Activated naive CD4-positive, alpha-beta T cell treated with anti-CD3 and anti-CD28 coated beads for 36 hours (primary cell): ENCODE measurements at regions of chr7 and their contacts with region 1.

Region 1: DNA sequence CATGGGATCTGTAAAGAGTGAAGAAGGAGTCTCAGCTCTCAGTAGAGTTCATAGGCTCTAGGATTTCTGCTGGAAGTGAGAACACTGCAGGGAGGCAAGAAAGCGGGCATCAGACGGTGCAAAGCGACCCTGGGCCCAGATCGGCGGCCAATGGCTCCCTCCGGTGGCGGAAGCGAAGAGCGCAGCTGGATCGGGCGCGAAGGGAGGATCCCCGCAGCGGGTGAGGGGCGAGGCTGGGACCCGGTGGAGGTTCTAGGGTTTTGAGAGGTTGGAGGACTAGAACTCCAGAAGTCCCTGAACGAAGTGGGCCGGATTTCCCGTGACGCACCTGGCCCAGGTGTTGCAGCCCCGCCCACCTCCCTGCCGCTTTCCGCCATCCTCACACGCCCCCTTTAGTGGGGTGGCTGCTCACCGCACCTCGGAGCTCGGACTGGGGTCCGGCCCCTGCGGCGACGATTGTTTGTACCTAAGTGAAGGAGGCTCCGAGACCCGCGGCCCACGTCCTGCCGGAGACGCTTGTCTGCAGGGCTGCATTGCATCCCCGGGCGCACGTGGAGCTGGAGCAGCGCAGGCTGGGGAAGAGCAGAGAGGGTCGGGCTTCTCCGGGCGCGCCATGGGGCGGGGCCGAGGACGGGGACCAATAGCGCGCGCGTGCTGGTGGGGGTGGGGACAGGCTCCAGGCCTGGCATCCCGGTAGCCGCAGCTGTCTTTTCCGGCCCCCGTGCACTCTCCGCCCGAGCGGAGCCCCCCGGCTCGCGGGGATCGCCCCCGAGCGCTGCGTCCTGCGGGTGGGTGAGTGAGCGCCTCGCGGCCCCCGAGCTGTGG is at the start of gene SLC12A9:
- DNase-seq: peak; percentile 89
- H3K4me3 Mint-ChIP-seq: peak within 1 kb of the TSS; percentile 89
- H3K27ac Mint-ChIP-seq: peak within 1 kb of the TSS; percentile 50
- H3K4me1 Mint-ChIP-seq: peaks cover 18% of the 10 kb centered on the region
- H3K27me3 Mint-ChIP-seq: no peaks in the 10 kb centered on the region
- total RNA-seq, gene SLC12A9: 10.1 to 10.5 TPM

Region 2: DNA sequence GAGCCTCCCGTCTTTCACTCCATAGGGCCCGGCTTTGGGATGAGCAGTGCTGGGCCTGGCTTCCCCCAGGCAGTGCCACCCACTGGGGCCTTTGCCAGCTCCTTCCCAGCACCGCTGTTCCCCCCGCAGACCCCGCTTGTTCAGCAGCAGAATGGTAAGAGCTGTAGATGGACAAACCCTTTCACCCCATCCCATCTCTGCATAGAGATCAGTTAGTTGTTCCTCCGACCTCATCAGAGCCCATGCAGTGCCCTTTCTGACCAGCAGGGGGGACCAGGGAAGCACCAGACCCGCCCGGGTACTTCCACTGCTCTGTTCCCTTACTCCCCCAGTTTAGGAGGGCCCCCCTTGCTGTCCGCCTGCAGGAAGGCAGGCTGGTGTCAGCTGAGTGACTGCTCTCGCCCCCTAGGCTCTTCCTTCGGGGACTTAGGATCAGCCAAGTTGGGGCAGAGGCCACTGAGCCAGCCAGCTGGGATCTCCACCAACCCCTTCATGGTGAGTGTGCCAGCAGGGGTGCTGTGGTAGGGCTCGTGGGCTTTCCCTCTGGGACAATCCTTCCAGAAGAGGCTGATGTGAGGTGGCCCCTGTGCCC is 288.4 kb before region 1 on chr7:
- CTCF ChIA-PET with region 1: no interaction called
- intact Hi-C with region 1: loop called (anchors 1 kb)
- DNase-seq: peak; percentile 90
- H3K4me3 Mint-ChIP-seq: no peak overlapping the region
- H3K27ac Mint-ChIP-seq: no peak overlapping the region
- H3K4me1 Mint-ChIP-seq: peaks cover 15% of the 10 kb centered on the region
- H3K27me3 Mint-ChIP-seq: no peaks in the 10 kb centered on the region

Region 3: GRCh38 chr7:100604028-100604975 is 248.0 kb before region 1 on chr7:
- CTCF ChIA-PET with region 1: no interaction called
- intact Hi-C with region 1: loop called (anchors 1 kb)
- DNase-seq: peak; percentile 77
- H3K4me3 Mint-ChIP-seq: peak overlapping the region; percentile 75
- H3K27ac Mint-ChIP-seq: peak overlapping the region; percentile 67
- H3K4me1 Mint-ChIP-seq: peaks cover 12% of the 10 kb centered on the region
- H3K27me3 Mint-ChIP-seq: no peaks in the 10 kb centered on the region

Region 4: DNA sequence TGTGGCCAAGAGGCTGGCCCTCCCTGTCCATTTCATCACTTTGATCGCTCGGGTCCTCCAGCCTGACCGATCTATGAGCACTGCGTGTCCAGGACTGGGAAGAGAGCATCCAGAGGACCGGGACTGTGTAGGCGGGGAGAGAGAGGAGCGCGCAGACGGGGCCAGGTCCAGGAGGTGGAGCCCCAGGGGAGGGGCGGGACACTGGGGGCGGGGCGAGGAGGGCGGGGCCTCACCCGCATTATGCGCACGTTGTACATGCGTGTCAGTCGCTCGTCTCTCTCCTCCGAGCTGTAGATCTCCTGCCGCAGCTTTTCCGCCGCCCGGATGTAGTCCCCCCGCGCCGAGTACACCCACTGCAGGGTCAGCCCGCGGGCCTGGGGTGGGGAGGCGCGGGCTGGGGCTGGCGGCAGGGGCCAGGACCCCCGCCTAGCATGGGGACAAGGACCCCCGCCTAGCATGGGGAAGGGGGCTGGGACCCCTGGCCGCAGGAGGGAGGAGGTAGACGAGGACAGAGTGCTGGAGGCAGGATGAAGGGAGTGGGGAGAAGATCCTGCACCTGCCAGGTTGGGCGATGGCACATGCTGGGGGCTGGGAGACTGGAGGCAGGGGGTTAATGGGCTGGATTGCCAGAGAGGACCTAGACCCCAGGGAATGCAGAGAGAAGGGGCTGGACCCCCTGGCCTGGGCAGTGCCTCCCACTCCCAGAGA is 225.6 kb before region 1 on chr7:
- CTCF ChIA-PET with region 1: no interaction called
- intact Hi-C with region 1: loop called (anchors 5 kb)
- DNase-seq: peak; percentile 91
- H3K4me3 Mint-ChIP-seq: peak overlapping the region; percentile 66
- H3K27ac Mint-ChIP-seq: peak overlapping the region; percentile 24
- H3K4me1 Mint-ChIP-seq: peaks cover 24% of the 10 kb centered on the region
- H3K27me3 Mint-ChIP-seq: no peaks in the 10 kb centered on the region

Region 5: GRCh38 chr7:100803398-100804233 is 48.6 kb before region 1 on chr7:
- CTCF ChIA-PET with region 1: interaction called, 98 read pairs
- intact Hi-C with region 1: loop called (anchors 1 kb)
- DNase-seq: peak; percentile 58
- H3K4me3 Mint-ChIP-seq: no peak overlapping the region
- H3K27ac Mint-ChIP-seq: no peak overlapping the region
- H3K4me1 Mint-ChIP-seq: peaks cover 9% of the 10 kb centered on the region
- H3K27me3 Mint-ChIP-seq: peaks cover 4% of the 10 kb centered on the region

Region 6: GRCh38 chr7:100874577-100875355 is 22.5 kb after region 1 on chr7 and contains the start of gene SRRT:
- CTCF ChIA-PET with region 1: interaction called, 6 read pairs
- intact Hi-C with region 1: loop called (anchors 1 kb)
- DNase-seq: peak; percentile 99
- H3K4me3 Mint-ChIP-seq: peak within 1 kb of the TSS; percentile 97
- H3K27ac Mint-ChIP-seq: peak within 1 kb of the TSS; percentile 98
- H3K4me1 Mint-ChIP-seq: peaks cover 44% of the 10 kb centered on the region
- H3K27me3 Mint-ChIP-seq: no peaks in the 10 kb centered on the region
- total RNA-seq, gene SRRT: 166 to 169 TPM